Activated T-helper 1 cell treated with anti-CD3 and anti-CD28 coated beads, Interleukin-12 subunit alpha, Interleukin-12 subunit beta, Interleukin-2, Interleukin-4 antibody, amounts not matched to agents 30 ng/mL and 10 ng/mL and 1 ng/mL, durations not matched to agents 14 hours and 24 hours and 36 hours (primary cell): ENCODE measurements at regions of chr5 and their contacts with region 1.

Region 1: DNA sequence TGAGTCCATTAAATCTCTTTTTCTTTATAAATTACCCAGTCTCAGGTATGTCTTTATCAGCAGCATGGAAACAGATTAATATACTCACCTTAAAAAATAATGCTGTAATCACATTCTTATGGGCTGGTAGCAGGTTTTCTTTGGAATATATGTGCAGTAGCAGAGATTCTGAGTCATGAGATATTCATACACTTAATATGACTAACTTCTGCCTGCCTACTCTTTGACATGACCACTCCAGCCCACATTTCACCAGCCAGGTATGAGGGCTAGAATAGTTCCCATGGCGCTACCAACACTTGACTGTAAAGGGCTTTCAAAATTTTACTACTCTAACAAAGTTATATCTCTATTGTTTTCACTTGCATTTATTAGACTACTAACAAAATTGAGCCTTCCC is 74.1 kb upstream of the GHR start:
- DNase-seq: no peak
- H3K4me3 Mint-ChIP-seq: no peak overlapping the region
- H3K27ac Mint-ChIP-seq: no peak overlapping the region
- H3K4me1 Mint-ChIP-seq: no peaks in the 10 kb centered on the region
- H3K27me3 Mint-ChIP-seq: no peaks in the 10 kb centered on the region

Region 2: GRCh38 chr5:42005561-42006153 is 343.5 kb before region 1 on chr5:
- intact Hi-C with region 1: no loop called
- DNase-seq: no peak
- H3K4me3 Mint-ChIP-seq: no peak overlapping the region
- H3K27ac Mint-ChIP-seq: no peak overlapping the region
- H3K4me1 Mint-ChIP-seq: no peaks in the 10 kb centered on the region
- H3K27me3 Mint-ChIP-seq: peaks cover 4% of the 10 kb centered on the region

Region 3: DNA sequence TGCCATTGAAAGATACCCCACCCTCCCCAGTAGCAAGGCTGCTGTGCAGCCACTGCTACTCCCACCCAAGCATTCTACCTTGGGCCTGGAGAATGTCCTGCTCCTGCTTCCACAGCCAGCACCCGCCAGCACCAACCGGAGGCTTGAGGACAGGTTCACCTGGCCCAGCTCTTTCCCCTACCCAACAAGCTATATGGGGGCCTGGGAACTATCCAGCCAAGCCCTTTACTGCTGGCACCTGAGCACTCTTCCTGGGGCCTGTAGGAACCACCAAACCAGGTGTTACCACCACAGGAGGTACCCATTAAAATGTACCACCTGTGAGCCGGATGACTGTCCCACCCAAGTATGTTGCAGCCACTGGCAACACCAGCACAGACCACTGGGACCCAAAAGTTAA is 12.0 kb before region 1 on chr5:
- intact Hi-C with region 1: no loop called
- DNase-seq: no peak
- H3K4me3 Mint-ChIP-seq: no peak overlapping the region
- H3K27ac Mint-ChIP-seq: no peak overlapping the region
- H3K4me1 Mint-ChIP-seq: no peaks in the 10 kb centered on the region
- H3K27me3 Mint-ChIP-seq: no peaks in the 10 kb centered on the region

Region 4: DNA sequence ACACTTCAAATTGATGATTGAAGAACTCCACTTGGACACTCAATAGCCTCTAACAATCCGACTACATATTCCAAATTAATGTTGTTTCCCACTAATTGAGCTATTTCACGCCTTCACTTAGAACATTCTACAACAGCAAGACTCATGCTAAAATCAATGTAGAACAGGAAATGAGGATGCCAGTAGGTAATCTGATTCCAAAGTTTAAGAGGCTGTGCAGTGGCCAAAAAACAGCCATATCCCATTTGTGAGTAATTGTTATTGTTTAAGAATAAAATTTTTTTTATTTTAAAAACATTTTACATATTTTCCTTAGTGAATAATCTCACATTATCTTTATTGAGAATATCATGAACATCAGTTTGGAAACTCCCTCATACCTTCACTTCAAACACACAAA is 38.4 kb after region 1 on chr5:
- intact Hi-C with region 1: loop called (anchors 1 kb)
- DNase-seq: no peak
- H3K4me3 Mint-ChIP-seq: no peak overlapping the region
- H3K27ac Mint-ChIP-seq: no peak overlapping the region
- H3K4me1 Mint-ChIP-seq: no peaks in the 10 kb centered on the region
- H3K27me3 Mint-ChIP-seq: no peaks in the 10 kb centered on the region